CD4-positive, alpha-beta memory T cell (primary cell): ENCODE measurements at regions of chr17 and their contacts with region 1.

Region 1: GRCh38 chr17:39057701-39058206 is 90.6 kb upstream of the FBXO47 start:
- DNase-seq: no peak
- H3K4me3 ChIP-seq: peak overlapping the region in 1 of 2 donors; percentile 64
- H3K4me3 Mint-ChIP-seq: peak overlapping the region in 7 of 8 donors; percentile 77 to 88 (median 84)
- H3K27ac ChIP-seq: no peak overlapping the region
- H3K27ac Mint-ChIP-seq: peak overlapping the region in 1 of 7 donors; percentile 66
- H3K4me1 ChIP-seq: no peaks in the 10 kb centered on the region
- H3K4me1 Mint-ChIP-seq: peaks cover 2 to 20% (median 6%) of the 10 kb centered on the region in 4 donors
- H3K27me3 ChIP-seq: no peaks in the 10 kb centered on the region
- H3K27me3 Mint-ChIP-seq: no peaks in the 10 kb centered on the region

Region 2: GRCh38 chr17:38667099-38667786 is 390.5 kb before region 1 on chr17:
- CTCF ChIA-PET with region 1: no interaction called
- POLR2A ChIA-PET with region 1: no interaction called
- intact Hi-C with region 1: no loop called
- DNase-seq: peak; percentile 43 to 57 (median 51)
- H3K4me3 ChIP-seq: no peak overlapping the region
- H3K4me3 Mint-ChIP-seq: no peak overlapping the region
- H3K27ac ChIP-seq: no peak overlapping the region
- H3K27ac Mint-ChIP-seq: no peak overlapping the region
- H3K4me1 ChIP-seq: no peaks in the 10 kb centered on the region
- H3K4me1 Mint-ChIP-seq: peaks cover 0 to 8% (median 1%) of the 10 kb centered on the region in 4 donors
- H3K27me3 ChIP-seq: peaks cover 20% of the 10 kb centered on the region
- H3K27me3 Mint-ChIP-seq: peaks cover 41 to 50% of the 10 kb centered on the region in 2 donors

Region 3: GRCh38 chr17:39001703-39002637 is 55.8 kb before region 1 on chr17:
- CTCF ChIA-PET with region 1: no interaction called
- POLR2A ChIA-PET with region 1: no interaction called
- intact Hi-C with region 1: loop called (anchors 5 kb)
- DNase-seq: no peak
- H3K4me3 ChIP-seq: no peak overlapping the region
- H3K4me3 Mint-ChIP-seq: peak overlapping the region in 4 of 8 donors; percentile 24 to 82 (median 33)
- H3K27ac ChIP-seq: no peak overlapping the region
- H3K27ac Mint-ChIP-seq: peak overlapping the region in 5 of 7 donors; percentile 0 to 89 (median 49)
- H3K4me1 ChIP-seq: peaks cover 16% of the 10 kb centered on the region
- H3K4me1 Mint-ChIP-seq: peaks cover 20 to 34% (median 27%) of the 10 kb centered on the region in 4 donors
- H3K27me3 ChIP-seq: no peaks in the 10 kb centered on the region
- H3K27me3 Mint-ChIP-seq: peaks cover 3 to 4% of the 10 kb centered on the region in 2 donors

Region 4: DNA sequence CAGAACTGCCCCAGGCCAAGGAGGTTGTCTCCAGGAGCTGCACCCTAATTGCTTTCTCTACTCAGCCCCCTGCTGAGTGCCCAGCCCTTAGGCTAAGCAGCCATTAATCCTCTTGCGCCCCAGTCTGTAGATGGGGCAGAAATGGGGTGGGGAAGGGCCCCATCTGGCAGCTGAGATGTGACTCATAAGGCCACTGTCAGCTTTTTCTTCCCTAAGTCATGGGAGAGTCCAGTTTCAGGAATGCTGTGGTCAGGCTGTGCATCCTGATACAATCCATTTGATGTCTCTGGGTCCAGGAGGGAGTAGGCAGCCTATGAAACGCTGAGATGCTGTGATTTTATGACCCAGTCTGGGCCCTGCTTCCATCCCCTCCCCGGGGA is 81.4 kb after region 1 on chr17:
- CTCF ChIA-PET with region 1: no interaction called
- POLR2A ChIA-PET with region 1: no interaction called
- intact Hi-C with region 1: no loop called
- DNase-seq: no peak
- H3K4me3 ChIP-seq: no peak overlapping the region
- H3K4me3 Mint-ChIP-seq: no peak overlapping the region
- H3K27ac ChIP-seq: no peak overlapping the region
- H3K27ac Mint-ChIP-seq: no peak overlapping the region
- H3K4me1 ChIP-seq: no peaks in the 10 kb centered on the region
- H3K4me1 Mint-ChIP-seq: no peaks in the 10 kb centered on the region
- H3K27me3 ChIP-seq: no peaks in the 10 kb centered on the region
- H3K27me3 Mint-ChIP-seq: no peaks in the 10 kb centered on the region